CD4-positive, alpha-beta memory T cell (primary cell): ENCODE measurements at regions of chr4 and their contacts with region 1.

Region 1: DNA sequence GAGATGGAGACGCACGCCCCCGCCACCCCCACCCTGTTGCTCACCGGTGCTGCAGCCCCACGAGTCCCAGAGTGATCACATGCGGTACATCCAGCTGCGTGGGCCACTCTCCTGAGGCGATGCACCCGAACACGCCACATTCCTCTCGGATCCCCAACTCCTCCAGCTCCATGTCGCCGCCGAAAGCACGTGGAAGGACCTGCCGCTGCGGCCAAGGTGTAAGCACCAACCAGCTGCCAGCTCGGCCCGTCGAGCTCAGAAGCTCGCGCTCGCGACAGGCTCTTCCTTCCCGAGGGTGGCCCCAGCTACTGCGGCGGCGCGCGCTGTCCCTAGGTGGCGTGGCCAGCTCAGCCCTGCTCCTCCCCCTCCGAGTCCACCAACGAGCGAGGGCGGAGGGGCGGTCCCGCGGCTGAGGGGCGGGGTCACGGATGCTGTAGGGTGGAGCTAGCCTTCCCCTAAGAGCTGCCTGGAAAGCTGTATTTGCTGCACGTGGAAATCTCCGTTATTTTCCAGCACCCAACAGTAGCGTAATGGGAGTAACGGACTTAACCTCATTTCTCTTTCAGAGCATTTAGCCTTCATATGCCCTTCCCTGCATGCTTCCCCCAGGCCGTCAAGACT is at the start of gene PPAT:
- DNase-seq: peak; percentile 98 to 99 (median 99)
- H3K4me3 ChIP-seq: peak within 1 kb of the TSS; percentile 76 to 82
- H3K4me3 Mint-ChIP-seq: peak within 1 kb of the TSS; percentile 90 to 99 (median 94)
- H3K27ac ChIP-seq: peak within 1 kb of the TSS; percentile 61
- H3K27ac Mint-ChIP-seq: peak within 1 kb of the TSS; percentile 87 to 98 (median 96)
- H3K4me1 ChIP-seq: peaks cover 26% of the 10 kb centered on the region
- H3K4me1 Mint-ChIP-seq: peaks cover 24 to 62% (median 39%) of the 10 kb centered on the region in 4 donors
- H3K27me3 ChIP-seq: no peaks in the 10 kb centered on the region
- H3K27me3 Mint-ChIP-seq: peaks cover 0 to 2% of the 10 kb centered on the region in 2 donors
- total RNA-seq, gene PPAT: 15.1 to 15.7 TPM

Region 2: DNA sequence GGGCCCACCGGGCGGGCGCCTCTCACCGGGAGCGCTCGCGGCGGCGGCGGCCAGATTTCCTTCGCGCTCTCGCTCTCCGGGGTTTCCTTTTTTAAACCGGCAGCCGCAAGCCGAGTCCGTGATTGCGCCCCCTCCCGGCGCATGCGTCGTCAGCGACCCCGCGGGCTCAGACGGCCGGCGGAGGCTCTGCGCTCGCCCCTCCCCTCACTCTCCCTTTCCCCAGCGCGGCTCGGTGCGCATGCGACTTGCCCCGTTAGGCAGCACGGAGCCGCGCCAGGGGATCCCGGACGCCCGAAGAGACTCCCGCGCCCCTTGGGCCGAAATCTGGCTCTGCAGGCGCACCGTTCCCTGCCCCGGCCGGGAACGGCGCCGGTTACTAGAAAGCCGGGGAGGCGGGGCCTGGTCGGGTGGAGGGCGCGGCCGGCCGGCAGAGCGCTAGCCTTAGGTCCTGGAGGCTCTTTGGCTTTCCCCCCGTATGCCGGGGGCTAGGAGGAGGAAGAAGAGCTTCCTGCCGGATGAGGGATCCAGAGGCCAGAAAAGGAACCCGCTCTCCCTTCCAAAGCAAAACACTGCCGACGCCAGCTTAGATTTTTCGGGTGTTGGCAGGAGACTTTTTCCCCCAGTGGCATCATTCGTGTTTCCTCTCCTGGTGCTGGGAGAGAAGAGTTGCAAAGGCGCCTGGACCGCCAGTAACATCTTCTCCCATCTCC is 888.5 kb before region 1 on chr4 and contains the start of gene CLOCK:
- CTCF ChIA-PET with region 1: no interaction called
- POLR2A ChIA-PET with region 1: interaction called, 8 read pairs
- intact Hi-C with region 1: loop called (anchors 5 kb)
- DNase-seq: peak; percentile 85 to 87 (median 85)
- H3K4me3 ChIP-seq: peak within 1 kb of the TSS; percentile 72 to 90
- H3K4me3 Mint-ChIP-seq: peak within 1 kb of the TSS; percentile 92 to 99 (median 96)
- H3K27ac ChIP-seq: peak within 1 kb of the TSS; percentile 75
- H3K27ac Mint-ChIP-seq: peak within 1 kb of the TSS; percentile 91 to 98 (median 95)
- H3K4me1 ChIP-seq: peaks cover 31% of the 10 kb centered on the region
- H3K4me1 Mint-ChIP-seq: peaks cover 32 to 67% (median 42%) of the 10 kb centered on the region in 4 donors
- H3K27me3 ChIP-seq: no peaks in the 10 kb centered on the region
- H3K27me3 Mint-ChIP-seq: no peaks in the 10 kb centered on the region
- total RNA-seq, gene CLOCK: 15.2 to 15.4 TPM

Region 3: GRCh38 chr4:56240554-56241174 is 194.8 kb before region 1 on chr4:
- CTCF ChIA-PET with region 1: no interaction called
- POLR2A ChIA-PET with region 1: no interaction called
- intact Hi-C with region 1: no loop called
- DNase-seq: no peak
- H3K4me3 ChIP-seq: no peak overlapping the region
- H3K4me3 Mint-ChIP-seq: no peak overlapping the region
- H3K27ac ChIP-seq: no peak overlapping the region
- H3K27ac Mint-ChIP-seq: no peak overlapping the region
- H3K4me1 ChIP-seq: no peaks in the 10 kb centered on the region
- H3K4me1 Mint-ChIP-seq: no peaks in the 10 kb centered on the region
- H3K27me3 ChIP-seq: no peaks in the 10 kb centered on the region
- H3K27me3 Mint-ChIP-seq: peaks cover 2 to 11% of the 10 kb centered on the region in 2 donors

Region 4: GRCh38 chr4:56387023-56388001 is 48.1 kb before region 1 on chr4 and contains the start of gene AASDH:
- CTCF ChIA-PET with region 1: interaction called, 15 read pairs
- POLR2A ChIA-PET with region 1: interaction called, 93 read pairs
- intact Hi-C with region 1: loop called (anchors 1 kb)
- DNase-seq: peak; percentile 94 to 96 (median 95)
- H3K4me3 ChIP-seq: peak within 1 kb of the TSS; percentile 63 to 94
- H3K4me3 Mint-ChIP-seq: peak within 1 kb of the TSS; percentile 91 to 100 (median 96)
- H3K27ac ChIP-seq: peak within 1 kb of the TSS; percentile 81
- H3K27ac Mint-ChIP-seq: peak within 1 kb of the TSS; percentile 98 to 100 (median 99)
- H3K4me1 ChIP-seq: peaks cover 20% of the 10 kb centered on the region
- H3K4me1 Mint-ChIP-seq: peaks cover 21 to 48% (median 37%) of the 10 kb centered on the region in 4 donors
- H3K27me3 ChIP-seq: no peaks in the 10 kb centered on the region
- H3K27me3 Mint-ChIP-seq: no peaks in the 10 kb centered on the region
- total RNA-seq, gene AASDH: 19.2 to 23.7 TPM

Region 5: GRCh38 chr4:56460085-56460484 is 24.7 kb after region 1 on chr4:
- CTCF ChIA-PET with region 1: interaction called, 11 read pairs
- POLR2A ChIA-PET with region 1: interaction called, 49 read pairs
- intact Hi-C with region 1: no loop called
- DNase-seq: no peak
- H3K4me3 ChIP-seq: no peak overlapping the region
- H3K4me3 Mint-ChIP-seq: no peak overlapping the region
- H3K27ac ChIP-seq: no peak overlapping the region
- H3K27ac Mint-ChIP-seq: peak overlapping the region in 1 of 7 donors; percentile 69
- H3K4me1 ChIP-seq: peaks cover 10% of the 10 kb centered on the region
- H3K4me1 Mint-ChIP-seq: peaks cover 10 to 19% (median 15%) of the 10 kb centered on the region in 4 donors
- H3K27me3 ChIP-seq: no peaks in the 10 kb centered on the region
- H3K27me3 Mint-ChIP-seq: no peaks in the 10 kb centered on the region

Region 6: GRCh38 chr4:56496241-56496640 is 60.8 kb after region 1 on chr4:
- CTCF ChIA-PET with region 1: no interaction called
- POLR2A ChIA-PET with region 1: no interaction called
- intact Hi-C with region 1: no loop called
- DNase-seq: no peak
- H3K4me3 ChIP-seq: no peak overlapping the region
- H3K4me3 Mint-ChIP-seq: no peak overlapping the region
- H3K27ac ChIP-seq: no peak overlapping the region
- H3K27ac Mint-ChIP-seq: no peak overlapping the region
- H3K4me1 ChIP-seq: no peaks in the 10 kb centered on the region
- H3K4me1 Mint-ChIP-seq: peaks cover 0 to 1% (median under 1%) of the 10 kb centered on the region in 4 donors
- H3K27me3 ChIP-seq: no peaks in the 10 kb centered on the region
- H3K27me3 Mint-ChIP-seq: no peaks in the 10 kb centered on the region

Region 7: GRCh38 chr4:56544573-56545131 is 109.2 kb after region 1 on chr4:
- CTCF ChIA-PET with region 1: interaction called, 18 read pairs
- POLR2A ChIA-PET with region 1: interaction called, 6 read pairs
- intact Hi-C with region 1: no loop called
- DNase-seq: peak; percentile 69 to 83 (median 78)
- H3K4me3 ChIP-seq: peak overlapping the region; percentile 37 to 42
- H3K4me3 Mint-ChIP-seq: peak overlapping the region; percentile 43 to 77 (median 64)
- H3K27ac ChIP-seq: no peak overlapping the region
- H3K27ac Mint-ChIP-seq: peak overlapping the region in 6 of 7 donors; percentile 7 to 79 (median 22)
- H3K4me1 ChIP-seq: peaks cover 13% of the 10 kb centered on the region
- H3K4me1 Mint-ChIP-seq: peaks cover 8 to 19% (median 8%) of the 10 kb centered on the region in 4 donors
- H3K27me3 ChIP-seq: no peaks in the 10 kb centered on the region
- H3K27me3 Mint-ChIP-seq: peaks cover 4% of the 10 kb centered on the region in 2 donors

Region 8: GRCh38 chr4:56708146-56708545 is 272.7 kb after region 1 on chr4:
- CTCF ChIA-PET with region 1: no interaction called
- POLR2A ChIA-PET with region 1: no interaction called
- intact Hi-C with region 1: no loop called
- DNase-seq: no peak
- H3K4me3 ChIP-seq: no peak overlapping the region
- H3K4me3 Mint-ChIP-seq: no peak overlapping the region
- H3K27ac ChIP-seq: no peak overlapping the region
- H3K27ac Mint-ChIP-seq: no peak overlapping the region
- H3K4me1 ChIP-seq: no peaks in the 10 kb centered on the region
- H3K4me1 Mint-ChIP-seq: no peaks in the 10 kb centered on the region
- H3K27me3 ChIP-seq: no peaks in the 10 kb centered on the region
- H3K27me3 Mint-ChIP-seq: peaks cover 7% of the 10 kb centered on the region in 2 donors

Region 9: DNA sequence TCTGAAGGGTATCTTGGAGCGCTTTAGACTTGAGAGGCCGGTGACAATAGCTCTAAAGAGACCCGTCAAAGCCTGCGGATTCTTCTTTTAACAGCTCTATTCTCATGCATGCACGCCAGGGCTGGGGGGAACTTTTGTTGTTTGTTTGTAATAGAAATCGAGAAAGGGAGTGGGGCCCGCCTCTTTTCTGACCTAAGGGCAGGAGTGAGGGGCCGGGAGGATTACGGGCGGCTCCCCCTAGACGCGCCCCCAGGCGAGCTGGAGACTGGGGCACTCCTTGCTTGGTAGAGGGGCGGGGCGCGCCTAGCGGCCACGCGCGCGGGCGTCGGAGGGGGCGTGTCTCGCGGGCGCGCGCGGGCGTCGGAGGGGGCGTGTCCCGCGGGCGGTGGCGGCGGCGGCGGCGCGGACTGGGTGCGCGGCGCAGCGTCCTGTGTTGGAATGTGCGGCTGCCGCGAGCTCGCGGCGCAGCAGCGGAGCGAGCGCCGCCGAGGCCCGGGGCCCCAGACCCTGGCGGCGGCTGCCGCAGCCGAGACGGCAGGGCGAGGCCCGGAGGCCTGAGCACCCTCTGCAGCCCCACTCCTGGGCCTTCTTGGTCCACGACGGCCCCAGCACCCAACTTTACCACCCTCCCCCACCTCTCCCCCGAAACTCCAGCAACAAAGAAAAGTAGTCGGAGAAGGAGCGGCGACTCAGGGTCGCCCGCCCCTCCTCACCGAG is 472.2 kb after region 1 on chr4 and contains the start of gene REST:
- CTCF ChIA-PET with region 1: interaction called, 5 read pairs
- POLR2A ChIA-PET with region 1: interaction called, 56 read pairs
- intact Hi-C with region 1: loop called (anchors 1 kb)
- DNase-seq: peak; percentile 80 to 91 (median 86)
- H3K4me3 ChIP-seq: peak within 1 kb of the TSS; percentile 58 to 79
- H3K4me3 Mint-ChIP-seq: peak within 1 kb of the TSS; percentile 89 to 97 (median 93)
- H3K27ac ChIP-seq: peak within 1 kb of the TSS; percentile 85
- H3K27ac Mint-ChIP-seq: peak within 1 kb of the TSS; percentile 87 to 97 (median 93)
- H3K4me1 ChIP-seq: peaks cover 42% of the 10 kb centered on the region
- H3K4me1 Mint-ChIP-seq: peaks cover 30 to 54% (median 43%) of the 10 kb centered on the region in 4 donors
- H3K27me3 ChIP-seq: no peaks in the 10 kb centered on the region
- H3K27me3 Mint-ChIP-seq: no peaks in the 10 kb centered on the region
- total RNA-seq, gene REST: 77.3 to 79.2 TPM

Region 10: GRCh38 chr4:57163530-57164459 is 728.4 kb after region 1 on chr4:
- CTCF ChIA-PET with region 1: no interaction called
- POLR2A ChIA-PET with region 1: no interaction called
- intact Hi-C with region 1: no loop called
- DNase-seq: peak; percentile 41 to 61 (median 56)
- H3K4me3 ChIP-seq: peak overlapping the region; percentile 76 to 87
- H3K4me3 Mint-ChIP-seq: peak overlapping the region; percentile 77 to 93 (median 90)
- H3K27ac ChIP-seq: no peak overlapping the region
- H3K27ac Mint-ChIP-seq: peak overlapping the region in 4 of 7 donors; percentile 15 to 74 (median 52)
- H3K4me1 ChIP-seq: peaks cover 4% of the 10 kb centered on the region
- H3K4me1 Mint-ChIP-seq: peaks cover 6 to 16% (median 9%) of the 10 kb centered on the region in 4 donors
- H3K27me3 ChIP-seq: no peaks in the 10 kb centered on the region
- H3K27me3 Mint-ChIP-seq: peaks cover 16 to 18% of the 10 kb centered on the region in 2 donors